ENCODE measurements at regions of chr11 and their contacts with region 1.

Region 1: DNA sequence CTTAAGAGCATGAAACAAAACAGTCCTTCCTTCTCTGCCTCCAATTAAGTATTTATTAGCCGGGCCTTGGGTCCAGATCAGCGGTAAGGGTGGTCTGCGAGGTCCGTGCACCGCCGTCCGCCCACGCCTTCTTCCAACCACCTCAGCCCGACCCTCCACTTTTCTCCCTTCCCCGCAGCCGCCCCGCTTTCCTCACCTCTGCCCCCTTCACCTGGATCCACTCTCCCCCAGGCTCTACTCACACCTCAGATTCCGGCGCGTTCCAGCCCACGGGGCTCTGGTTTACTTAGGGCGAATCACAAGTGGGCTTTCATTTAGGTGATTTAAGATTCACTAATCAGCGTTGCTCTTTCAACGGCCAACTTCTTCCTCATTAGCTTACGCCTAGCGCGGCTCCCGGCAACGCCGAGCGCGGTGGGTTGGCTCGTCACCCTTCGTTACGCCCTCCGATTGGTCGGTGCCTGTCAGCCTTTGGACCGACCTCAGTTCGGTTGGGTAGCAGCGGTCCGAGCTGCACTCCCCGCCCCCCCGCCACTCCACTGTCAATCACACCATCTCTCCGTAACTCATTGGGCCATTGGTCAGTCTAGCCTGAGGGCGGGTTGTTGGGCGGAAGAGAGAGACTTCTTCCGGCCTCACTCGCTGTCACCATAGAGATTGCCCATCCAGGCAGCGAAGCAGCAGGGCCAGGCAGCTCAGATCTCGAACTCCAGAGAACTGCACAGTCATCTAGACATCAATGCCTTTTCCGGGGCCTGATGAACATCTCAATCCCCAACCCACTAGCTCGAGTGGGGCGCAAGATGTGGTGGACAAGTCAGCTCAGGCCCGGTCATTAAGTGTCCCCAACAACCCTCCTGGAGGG is at the start of gene TMEM218:
- DNase-seq: peak; percentile 99
- H3K4me3 Mint-ChIP-seq: peak within 1 kb of the TSS; percentile 100
- H3K27ac Mint-ChIP-seq: peak within 1 kb of the TSS; percentile 100
- H3K4me1 Mint-ChIP-seq: peaks cover 20% of the 10 kb centered on the region
- H3K27me3 Mint-ChIP-seq: peaks cover 2% of the 10 kb centered on the region
- total RNA-seq, gene TMEM218: 17.3 and 18.2 TPM in 2 replicates

Region 2: DNA sequence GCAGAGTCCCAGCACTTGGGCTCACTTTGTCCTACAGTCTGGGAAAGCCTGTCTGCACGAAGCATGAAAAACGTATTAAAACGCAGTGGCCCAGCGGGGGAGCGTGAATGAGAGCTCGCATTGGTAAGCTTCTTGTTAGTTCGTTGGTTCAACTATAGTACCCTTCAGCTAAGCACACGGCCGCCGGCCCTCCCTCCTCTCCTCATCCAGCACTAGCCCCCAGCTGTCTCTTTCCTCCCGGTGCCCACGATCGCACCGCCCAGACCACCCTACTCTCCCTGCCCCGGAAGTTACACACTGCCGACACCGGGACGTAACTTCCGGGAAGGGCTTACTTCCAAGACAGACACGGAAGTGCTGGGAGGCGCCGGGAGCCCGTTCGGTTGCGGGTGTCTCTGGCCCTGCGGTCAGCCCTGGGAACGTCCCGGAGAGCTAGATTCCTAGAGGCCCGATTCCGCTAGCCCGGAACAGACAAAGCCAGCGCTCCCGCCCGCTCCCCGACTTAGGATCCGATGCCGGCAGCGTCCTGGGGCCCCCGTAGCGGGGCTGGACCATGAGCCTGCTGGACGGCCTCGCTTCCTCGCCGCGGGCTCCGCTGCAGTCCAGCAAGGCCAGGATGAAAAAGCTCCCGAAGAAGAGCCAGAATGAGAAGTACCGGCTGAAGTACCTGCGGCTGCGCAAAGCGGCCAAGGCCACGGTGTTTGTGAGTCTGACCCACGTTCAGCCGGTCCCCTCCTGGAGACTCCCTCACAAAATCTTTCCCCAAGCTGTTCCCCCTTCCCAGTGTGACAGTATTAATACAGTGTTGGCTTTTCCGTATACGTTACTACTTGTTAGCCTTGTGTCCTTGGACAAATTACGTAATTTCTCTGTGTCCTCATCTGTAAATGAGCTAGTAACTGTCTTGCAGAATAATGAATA is 488.8 kb before region 1 on chr11 and contains the start of gene TBRG1:
- intact Hi-C with region 1: loop called (anchors 2 kb)
- DNase-seq: peak; percentile 95
- H3K4me3 Mint-ChIP-seq: peak within 1 kb of the TSS; percentile 98
- H3K27ac Mint-ChIP-seq: peak within 1 kb of the TSS; percentile 96
- H3K4me1 Mint-ChIP-seq: peaks cover 22% of the 10 kb centered on the region
- H3K27me3 Mint-ChIP-seq: peaks cover 15% of the 10 kb centered on the region
- total RNA-seq, gene TBRG1: 31.0 and 31.6 TPM in 2 replicates

Region 3: DNA sequence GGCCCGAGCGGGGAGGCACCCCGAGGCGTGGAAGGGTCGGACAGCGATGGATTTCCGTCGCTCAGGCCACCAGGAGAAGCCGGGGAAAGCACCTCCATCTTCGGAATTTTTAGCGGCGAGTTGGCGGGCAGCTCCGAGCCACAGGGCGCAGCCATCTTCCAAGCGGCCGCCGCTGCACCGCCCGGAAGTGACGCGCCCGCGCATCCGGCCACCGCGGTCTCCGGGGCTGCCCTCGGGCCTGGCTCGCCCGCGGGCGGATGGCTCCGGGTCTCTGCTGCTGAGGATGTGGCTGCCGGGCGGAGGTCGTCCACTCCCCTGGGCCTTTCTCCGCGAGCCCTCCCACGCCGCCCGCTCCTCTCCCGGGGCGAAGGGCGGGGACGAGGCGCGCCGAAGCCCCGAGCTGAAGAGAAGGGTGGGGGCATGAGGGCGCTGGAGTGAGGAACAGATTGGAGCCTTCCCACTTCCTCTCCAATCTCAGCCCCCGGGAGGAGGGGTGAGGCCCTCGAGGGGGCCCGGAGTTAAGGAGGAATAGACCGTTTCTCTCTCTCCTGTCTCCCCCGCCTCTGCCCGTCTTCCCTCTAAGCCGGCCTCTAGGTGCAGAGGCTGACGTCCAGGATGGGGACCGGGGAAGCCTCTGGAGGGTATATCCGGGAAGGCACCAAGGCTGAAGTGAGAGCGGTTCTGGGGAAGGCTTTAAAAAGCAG is 311.2 kb before region 1 on chr11 and contains the start of gene MSANTD2:
- intact Hi-C with region 1: loop called (anchors 5 kb)
- DNase-seq: peak; percentile 96
- H3K4me3 Mint-ChIP-seq: peak within 1 kb of the TSS; percentile 95
- H3K27ac Mint-ChIP-seq: peak within 1 kb of the TSS; percentile 90
- H3K4me1 Mint-ChIP-seq: peaks cover 21% of the 10 kb centered on the region
- H3K27me3 Mint-ChIP-seq: peaks cover 16% of the 10 kb centered on the region
- total RNA-seq, gene MSANTD2: 10.6 TPM in 2 replicates

Region 4: GRCh38 chr11:124875943-124876817 is 235.4 kb before region 1 on chr11:
- intact Hi-C with region 1: loop called (anchors 1 kb)
- DNase-seq: peak; percentile 95
- H3K4me3 Mint-ChIP-seq: peak overlapping the region; percentile 91
- H3K27ac Mint-ChIP-seq: peak overlapping the region; percentile 86
- H3K4me1 Mint-ChIP-seq: peaks cover 11% of the 10 kb centered on the region
- H3K27me3 Mint-ChIP-seq: peaks cover 47% of the 10 kb centered on the region

Region 5: GRCh38 chr11:125036933-125037332 is 74.6 kb before region 1 on chr11:
- intact Hi-C with region 1: no loop called
- DNase-seq: no peak
- H3K4me3 Mint-ChIP-seq: no peak overlapping the region
- H3K27ac Mint-ChIP-seq: no peak overlapping the region
- H3K4me1 Mint-ChIP-seq: no peaks in the 10 kb centered on the region
- H3K27me3 Mint-ChIP-seq: no peaks in the 10 kb centered on the region

Region 6: GRCh38 chr11:125062931-125063428 is 48.6 kb before region 1 on chr11 and contains the start of gene SLC37A2:
- intact Hi-C with region 1: loop called (anchors 5 kb)
- DNase-seq: peak; percentile 84
- H3K4me3 Mint-ChIP-seq: peak within 1 kb of the TSS; percentile 87
- H3K27ac Mint-ChIP-seq: no peak within 1 kb of the TSS
- H3K4me1 Mint-ChIP-seq: peaks cover 2% of the 10 kb centered on the region
- H3K27me3 Mint-ChIP-seq: peaks cover 65% of the 10 kb centered on the region
- total RNA-seq, gene SLC37A2: 0.07 TPM in 2 replicates

Region 7: DNA sequence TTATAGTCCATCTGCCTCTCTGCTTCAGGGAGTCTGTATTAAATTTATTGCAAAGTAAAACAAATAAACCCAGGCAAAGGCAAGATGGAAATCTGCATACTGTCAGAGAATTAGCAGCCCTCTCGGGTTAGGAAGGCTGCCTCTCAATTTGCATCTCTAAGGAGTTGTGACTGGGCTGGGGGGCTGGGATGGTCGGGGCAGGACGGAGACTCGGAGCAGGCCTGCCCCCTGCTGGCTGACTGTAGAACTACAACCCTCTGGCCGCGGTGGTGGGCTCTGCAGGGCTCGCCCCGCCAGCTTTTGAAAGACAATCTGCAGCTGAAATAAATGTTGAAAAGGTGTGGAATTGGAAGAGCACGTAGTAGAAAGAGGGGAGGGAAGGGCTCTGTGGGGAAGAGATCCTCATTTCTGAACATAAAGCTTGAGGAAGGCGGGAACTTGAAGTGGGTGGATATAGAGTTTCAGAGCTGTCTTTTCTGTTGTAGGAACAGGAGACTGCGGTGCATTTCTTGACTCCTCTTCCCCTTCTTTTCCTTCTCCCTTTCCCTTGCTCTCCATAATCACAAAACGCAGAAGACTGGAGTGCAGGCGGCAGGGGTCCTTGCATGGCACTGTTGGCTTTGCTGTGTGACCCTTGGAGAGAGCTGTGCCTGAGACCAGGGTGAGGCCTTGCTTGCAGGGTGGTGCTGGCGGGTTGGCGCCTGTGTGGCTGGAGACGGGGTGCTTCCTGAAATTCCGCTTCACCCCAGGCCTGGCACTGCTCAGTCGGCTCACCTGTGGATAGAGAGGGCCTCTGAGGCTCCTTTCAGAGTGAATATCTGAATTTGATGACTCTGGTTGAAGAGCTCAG is 30.3 kb after region 1 on chr11:
- intact Hi-C with region 1: no loop called
- DNase-seq: peak; percentile 87
- H3K4me3 Mint-ChIP-seq: no peak overlapping the region
- H3K27ac Mint-ChIP-seq: no peak overlapping the region
- H3K4me1 Mint-ChIP-seq: peaks cover 3% of the 10 kb centered on the region
- H3K27me3 Mint-ChIP-seq: peaks cover 38% of the 10 kb centered on the region

Region 8: DNA sequence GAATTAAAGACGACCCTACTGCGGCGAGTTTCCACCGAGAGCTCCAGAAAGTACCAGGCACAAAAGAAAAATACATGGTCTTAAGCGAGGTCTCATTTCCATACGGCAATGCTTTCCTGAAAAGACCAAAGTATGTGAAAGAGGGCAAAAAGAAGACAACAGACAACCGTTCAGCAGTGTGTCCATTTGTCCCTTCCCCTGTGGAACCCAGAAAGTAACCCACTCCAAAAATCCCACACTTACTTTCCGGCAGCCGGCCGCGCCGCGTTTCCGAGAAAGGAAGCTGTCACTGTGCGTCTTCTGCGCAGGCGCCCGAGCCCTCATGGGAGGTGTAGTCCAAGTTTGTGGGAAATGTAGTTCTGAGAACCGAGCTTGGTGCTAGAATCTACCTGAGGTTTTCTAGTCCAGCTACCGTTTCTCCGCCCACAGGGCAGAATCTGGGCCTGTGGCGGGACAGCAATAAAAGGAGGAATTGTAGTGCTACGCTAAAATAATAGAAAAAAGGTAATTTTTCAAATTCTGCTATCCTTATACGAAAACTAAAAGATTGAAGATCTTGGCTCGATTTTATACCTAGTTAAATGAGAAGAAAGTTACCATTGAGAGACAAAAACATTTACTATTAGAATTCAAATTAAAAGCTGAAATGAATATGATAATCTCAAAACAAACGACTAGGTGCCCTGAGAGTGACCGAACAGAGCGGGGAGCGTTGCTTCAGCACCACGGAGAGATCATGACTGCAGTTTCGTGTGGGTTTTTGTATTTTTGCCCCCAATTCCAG is 791.5 kb after region 1 on chr11 and contains the start of gene PUS3:
- intact Hi-C with region 1: loop called (anchors 5 kb)
- DNase-seq: peak; percentile 97
- H3K4me3 Mint-ChIP-seq: peak within 1 kb of the TSS; percentile 95
- H3K27ac Mint-ChIP-seq: peak within 1 kb of the TSS; percentile 94
- H3K4me1 Mint-ChIP-seq: peaks cover 28% of the 10 kb centered on the region
- H3K27me3 Mint-ChIP-seq: peaks cover 29% of the 10 kb centered on the region
- total RNA-seq, gene PUS3: 18.0 and 19.2 TPM in 2 replicates